ENCODE measurements at regions of chr7 and their contacts with region 1.

Region 1: GRCh38 chr7:130010689-130011412 is 40.3 kb downstream of the ZC3HC1 start:
- DNase-seq: peak; percentile 89 to 96 (median 94)
- ATAC-seq: peak; percentile 30
- H3K4me3 ChIP-seq: no peak overlapping the region
- H3K27ac ChIP-seq: peak overlapping the region; percentile 93 to 94 (median 94)
- H3K4me1 ChIP-seq: peaks cover 37% of the 10 kb centered on the region
- H3K27me3 ChIP-seq: no peaks in the 10 kb centered on the region
- CTCF ChIP-seq: peak; percentile 83 to 99 (median 96)
- POLR2A ChIP-seq: no peak

Region 2: DNA sequence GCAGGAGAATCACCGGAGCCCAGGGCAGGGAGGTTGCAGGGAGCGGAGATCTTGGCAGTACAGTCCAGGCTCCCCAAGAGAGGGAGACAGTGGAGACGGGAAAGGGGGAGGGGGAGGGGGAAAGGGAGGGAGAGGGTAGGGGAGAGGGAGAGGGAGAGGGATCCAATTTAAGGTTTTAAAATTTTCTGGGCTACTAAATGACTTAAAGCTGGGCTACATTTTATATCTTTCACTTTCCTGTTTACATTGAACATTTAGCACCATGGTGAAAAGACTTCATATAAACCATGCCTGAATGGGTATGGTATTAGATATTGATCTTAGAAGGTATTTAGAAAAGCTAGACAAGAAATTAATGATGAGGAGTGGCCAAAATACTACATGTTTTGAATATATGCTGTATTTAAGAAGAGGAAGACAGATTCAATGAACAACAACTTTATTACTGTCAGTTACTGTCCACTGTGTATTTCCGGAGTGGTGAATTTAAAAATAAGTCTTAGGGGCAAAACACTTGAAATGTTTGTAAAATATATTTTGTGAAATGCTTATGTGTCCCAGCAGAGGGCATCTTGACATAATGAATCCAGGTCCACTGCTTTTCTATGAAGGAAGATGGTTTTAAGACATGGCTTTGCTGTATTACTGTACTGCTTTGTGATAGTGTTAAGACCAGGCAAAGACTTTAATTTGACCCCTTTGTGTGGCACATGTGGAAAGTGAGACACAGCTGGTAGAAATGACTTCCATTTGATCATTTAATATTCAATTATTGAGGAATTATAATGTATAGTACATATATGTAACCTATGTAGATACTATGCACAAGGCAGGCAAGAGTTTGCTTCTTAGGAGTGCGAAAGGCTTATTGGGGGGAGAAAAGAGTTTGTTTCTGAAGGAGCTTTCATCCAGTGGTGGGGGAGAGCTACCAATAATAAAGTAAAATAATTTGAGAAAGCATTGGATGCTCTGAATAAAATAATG is 346.5 kb before region 1 on chr7:
- intact Hi-C with region 1: loop called (anchors 10 kb)
- DNase-seq: no peak
- ATAC-seq: peak; percentile 30
- H3K4me3 ChIP-seq: no peak overlapping the region
- H3K27ac ChIP-seq: no peak overlapping the region
- H3K4me1 ChIP-seq: no peaks in the 10 kb centered on the region
- H3K27me3 ChIP-seq: no peaks in the 10 kb centered on the region
- CTCF ChIP-seq: peak in 6 of 7 experiments; percentile 10 to 62 (median 52)
- POLR2A ChIP-seq: no peak

Region 3: DNA sequence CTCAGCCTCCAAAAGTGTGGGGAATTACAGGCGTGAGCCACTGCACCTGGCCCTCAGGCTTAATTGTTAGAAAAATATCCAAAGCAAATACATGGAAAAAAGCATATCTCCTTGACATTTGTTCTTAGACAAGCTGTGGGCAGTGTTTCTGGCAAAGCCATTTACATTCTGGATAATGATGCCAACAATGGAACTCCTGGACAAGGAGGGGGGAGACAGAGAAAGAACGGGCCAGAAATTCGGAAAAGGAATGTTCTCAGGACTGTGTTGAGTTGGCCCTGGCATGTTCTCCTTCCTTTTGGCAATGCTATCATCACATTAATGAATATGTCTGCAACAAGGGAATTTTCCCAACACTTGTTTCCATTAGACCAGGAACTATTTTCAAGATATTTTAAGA is 146.8 kb before region 1 on chr7:
- intact Hi-C with region 1: no loop called
- DNase-seq: peak; percentile 59 to 90 (median 68)
- ATAC-seq: peak; percentile 87
- H3K4me3 ChIP-seq: no peak overlapping the region
- H3K27ac ChIP-seq: peak overlapping the region; percentile 72 to 85 (median 76)
- H3K4me1 ChIP-seq: peaks cover 81% of the 10 kb centered on the region
- H3K27me3 ChIP-seq: no peaks in the 10 kb centered on the region
- CTCF ChIP-seq: no peak
- POLR2A ChIP-seq: no peak